Panc1 (cell line): ENCODE measurements at regions of chr7 and their contacts with region 1.

Region 1: DNA sequence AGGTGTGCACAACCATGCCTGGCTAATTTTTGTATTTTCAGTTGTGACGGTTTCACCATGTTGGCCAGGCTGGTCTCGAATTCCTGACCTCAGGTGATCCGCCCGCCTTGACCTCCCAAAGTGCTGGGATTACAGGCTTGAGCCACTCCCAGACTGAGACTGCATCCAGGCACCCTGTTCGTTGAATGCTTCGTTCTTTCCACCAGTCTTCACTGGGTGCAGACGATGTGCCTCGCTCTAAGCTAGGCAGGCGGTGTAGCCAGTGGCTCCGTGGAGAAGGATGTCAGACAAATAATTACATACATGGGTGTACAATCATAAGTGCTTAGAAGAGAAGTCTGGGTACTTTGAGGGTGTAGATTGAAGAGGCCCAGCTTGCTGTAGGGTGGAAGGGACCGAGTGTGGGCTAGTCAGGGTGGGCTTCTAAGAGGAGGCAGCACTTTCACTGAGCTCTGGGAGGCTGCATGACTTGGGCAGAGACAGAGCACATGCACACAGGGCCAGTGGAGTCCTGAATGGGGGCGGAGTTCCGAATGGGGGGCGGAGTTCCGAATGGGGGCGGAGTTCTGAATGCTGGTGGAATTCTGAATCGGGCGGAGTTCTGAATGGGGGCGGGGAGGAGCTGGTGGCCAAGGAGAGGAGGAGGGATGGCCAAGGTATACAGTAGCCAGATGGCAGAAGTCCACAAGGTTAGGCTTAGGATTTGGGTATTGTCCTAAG is 74.3 kb downstream of the COL26A1 start:
- DNase-seq: no peak
- ATAC-seq: peak; percentile 55
- H3K4me3 ChIP-seq: no peak overlapping the region
- H3K27ac ChIP-seq: no peak overlapping the region
- H3K4me1 ChIP-seq: peaks cover 6% of the 10 kb centered on the region
- H3K27me3 ChIP-seq: no peaks in the 10 kb centered on the region
- CTCF ChIP-seq: no peak

Region 2: DNA sequence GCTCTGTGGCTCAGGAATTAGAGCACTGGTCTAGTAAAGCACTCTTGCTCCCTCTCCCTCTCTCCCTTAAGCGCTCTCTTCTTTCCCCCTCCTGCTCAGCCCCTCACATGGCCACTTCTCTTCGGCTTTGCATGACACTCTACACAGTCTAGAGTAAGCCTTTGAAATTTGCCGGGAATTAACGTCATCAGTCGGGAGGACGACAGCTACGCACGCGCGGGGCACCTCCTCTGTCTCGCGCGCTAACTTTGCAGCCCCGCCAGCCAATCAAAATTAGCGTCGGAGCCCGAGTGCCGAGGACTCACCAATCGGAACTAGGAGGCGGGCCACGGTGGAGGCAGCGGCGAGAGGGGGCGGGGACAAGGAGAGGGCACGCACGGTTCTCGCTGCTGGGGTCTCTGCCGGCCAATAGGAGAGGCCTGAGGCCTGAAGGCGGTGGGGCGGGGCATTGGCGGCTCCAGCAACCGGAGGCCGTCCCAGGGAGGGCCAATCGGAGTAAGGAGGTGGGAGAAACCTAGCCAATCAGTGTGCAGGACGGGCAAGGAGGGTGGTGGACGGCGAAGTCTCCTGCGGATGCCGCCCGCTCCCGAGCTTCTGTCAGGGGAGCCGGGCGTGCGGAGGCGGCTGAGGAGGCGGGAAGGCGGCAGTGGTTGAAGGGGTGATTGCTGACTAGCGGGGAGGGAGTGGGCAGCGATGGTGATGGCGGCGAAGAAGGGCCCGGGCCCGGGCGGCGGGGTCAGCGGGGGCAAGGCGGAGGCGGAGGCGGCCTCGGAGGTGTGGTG is 898.2 kb before region 1 on chr7 and contains the start of gene AGFG2:
- CTCF ChIA-PET with region 1: no interaction called
- POLR2A ChIA-PET with region 1: no interaction called
- in situ Hi-C with region 1: no loop called
- intact Hi-C with region 1: no loop called
- DNase-seq: peak; percentile 99
- ATAC-seq: peak; percentile 99
- H3K4me3 ChIP-seq: peak within 1 kb of the TSS; percentile 70 to 71
- H3K27ac ChIP-seq: peak within 1 kb of the TSS; percentile 72
- H3K4me1 ChIP-seq: peaks cover 20% of the 10 kb centered on the region
- H3K27me3 ChIP-seq: no peaks in the 10 kb centered on the region
- CTCF ChIP-seq: no peak
- total RNA-seq, gene AGFG2: 42.5 TPM

Region 3: DNA sequence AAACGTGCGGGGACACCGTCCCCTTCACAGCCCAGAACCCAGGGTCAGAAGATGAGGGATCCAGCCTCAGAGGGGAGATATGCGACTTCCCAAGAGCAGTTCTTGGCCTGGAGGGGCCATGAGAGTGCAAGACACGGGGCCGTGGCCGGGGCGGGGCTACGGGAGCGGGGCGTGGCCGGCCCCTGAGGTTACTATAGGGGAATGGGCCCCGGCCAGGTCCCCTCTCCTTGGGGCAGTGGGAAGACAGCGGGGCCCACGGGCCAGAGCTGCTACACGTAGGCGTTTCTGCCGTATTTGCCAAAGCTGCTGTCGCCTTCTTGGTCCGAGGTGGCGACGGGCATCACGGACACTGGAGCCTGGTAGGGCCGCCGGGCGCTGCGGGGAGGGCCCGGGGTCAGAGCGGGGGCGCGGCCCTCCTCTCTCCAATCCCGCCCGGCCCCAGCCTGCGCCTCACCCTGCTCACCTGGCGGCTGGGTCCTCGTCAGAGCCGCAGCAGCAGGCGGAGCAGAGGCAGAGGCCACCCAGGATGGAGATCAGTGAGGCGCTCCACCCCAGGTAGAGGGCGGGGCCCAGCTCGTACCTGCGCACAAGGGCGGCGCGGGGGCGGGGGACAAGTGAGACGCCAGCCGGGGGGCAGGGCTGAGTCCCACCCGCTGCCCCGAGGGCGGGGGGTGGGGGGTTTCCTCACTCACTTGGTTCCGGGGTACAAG is 204.7 kb before region 1 on chr7:
- CTCF ChIA-PET with region 1: interaction called, 11 read pairs
- POLR2A ChIA-PET with region 1: no interaction called
- in situ Hi-C with region 1: no loop called
- intact Hi-C with region 1: no loop called
- DNase-seq: no peak
- ATAC-seq: peak; percentile 75
- H3K4me3 ChIP-seq: peak overlapping the region; percentile 42 to 55
- H3K27ac ChIP-seq: peak overlapping the region; percentile 49
- H3K4me1 ChIP-seq: peaks cover 6% of the 10 kb centered on the region; the same call in 1 of the 2 replicates
- H3K27me3 ChIP-seq: no peaks in the 10 kb centered on the region
- CTCF ChIP-seq: no peak

Region 4: DNA sequence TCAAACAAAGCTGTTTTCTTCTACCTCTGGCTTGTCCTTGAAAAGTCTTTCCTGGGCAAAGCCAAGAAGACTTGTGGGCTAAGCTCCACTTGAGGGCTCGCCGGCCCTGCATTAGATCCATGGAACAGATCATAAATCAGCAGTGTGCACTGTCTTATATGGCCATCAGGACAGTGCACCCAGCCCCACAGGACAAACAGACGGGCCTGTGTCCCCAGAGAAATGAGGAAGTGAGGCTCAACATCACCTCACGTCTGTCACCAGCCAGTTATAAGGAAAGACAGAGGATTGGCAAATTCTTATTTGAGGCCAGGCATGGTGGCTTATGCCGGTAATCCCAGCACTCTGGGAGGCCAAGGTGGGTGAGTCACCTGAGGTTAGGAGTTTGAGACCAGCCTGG is 103.1 kb before region 1 on chr7:
- CTCF ChIA-PET with region 1: no interaction called
- POLR2A ChIA-PET with region 1: no interaction called
- in situ Hi-C with region 1: no loop called
- intact Hi-C with region 1: no loop called
- DNase-seq: no peak
- ATAC-seq: no peak
- H3K4me3 ChIP-seq: no peak overlapping the region
- H3K27ac ChIP-seq: no peak overlapping the region
- H3K4me1 ChIP-seq: no peaks in the 10 kb centered on the region
- H3K27me3 ChIP-seq: no peaks in the 10 kb centered on the region
- CTCF ChIP-seq: no peak

Region 5: DNA sequence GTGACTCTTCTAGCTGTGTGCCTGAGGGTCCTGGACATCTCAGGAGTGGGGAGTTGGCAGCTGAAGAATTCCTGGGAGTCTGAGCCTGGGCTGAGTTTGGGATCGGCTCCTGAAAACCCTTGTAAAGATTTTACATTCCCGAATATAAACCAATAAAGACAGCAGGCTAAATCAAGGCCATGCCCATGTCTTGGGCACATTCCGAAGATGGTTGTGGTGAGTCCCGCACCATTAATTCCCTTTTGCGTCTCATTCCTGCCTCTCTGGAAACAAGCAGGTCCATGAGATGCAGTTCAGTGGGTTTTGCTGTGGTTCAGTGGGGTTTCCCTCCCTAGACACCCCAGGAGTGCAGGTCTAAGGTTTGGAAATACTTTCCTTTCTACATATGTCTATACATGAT is 16.6 kb after region 1 on chr7:
- CTCF ChIA-PET with region 1: no interaction called
- POLR2A ChIA-PET with region 1: no interaction called
- in situ Hi-C with region 1: no loop called
- intact Hi-C with region 1: no loop called
- DNase-seq: no peak
- ATAC-seq: peak; percentile 58
- H3K4me3 ChIP-seq: no peak overlapping the region
- H3K27ac ChIP-seq: peak overlapping the region; percentile 67
- H3K4me1 ChIP-seq: peaks cover 9% of the 10 kb centered on the region
- H3K27me3 ChIP-seq: no peaks in the 10 kb centered on the region
- CTCF ChIP-seq: no peak

Region 6: GRCh38 chr7:101479217-101479616 is 42.2 kb after region 1 on chr7:
- CTCF ChIA-PET with region 1: no interaction called
- POLR2A ChIA-PET with region 1: interaction called, 11 read pairs
- in situ Hi-C with region 1: no loop called
- intact Hi-C with region 1: no loop called
- DNase-seq: no peak
- ATAC-seq: no peak
- H3K4me3 ChIP-seq: no peak overlapping the region
- H3K27ac ChIP-seq: no peak overlapping the region
- H3K4me1 ChIP-seq: no peaks in the 10 kb centered on the region
- H3K27me3 ChIP-seq: no peaks in the 10 kb centered on the region
- CTCF ChIP-seq: no peak